Ovary (tissue), 10 donors: ENCODE measurements at regions of chr6 and their contacts with region 1.

Region 1: GRCh38 chr6:129598244-129599187 is 111.5 kb downstream of the ARHGAP18 start:
- DNase-seq: no peak
- H3K4me3 ChIP-seq: no peak overlapping the region
- H3K27ac ChIP-seq: no peak overlapping the region
- H3K4me1 ChIP-seq: no peaks in the 10 kb centered on the region
- H3K27me3 ChIP-seq: no peaks in the 10 kb centered on the region
- CTCF ChIP-seq: peak; percentile 69 to 92 (median 85)
- EP300 ChIP-seq: no peak
- POLR2A ChIP-seq: no peak

Region 2: GRCh38 chr6:129175066-129175465 is 423.4 kb before region 1 on chr6:
- intact Hi-C with region 1: no loop called
- DNase-seq: no peak
- H3K4me3 ChIP-seq: no peak overlapping the region
- H3K27ac ChIP-seq: no peak overlapping the region
- H3K4me1 ChIP-seq: no peaks in the 10 kb centered on the region
- H3K27me3 ChIP-seq: no peaks in the 10 kb centered on the region
- CTCF ChIP-seq: no peak
- EP300 ChIP-seq: no peak
- POLR2A ChIP-seq: no peak

Region 3: DNA sequence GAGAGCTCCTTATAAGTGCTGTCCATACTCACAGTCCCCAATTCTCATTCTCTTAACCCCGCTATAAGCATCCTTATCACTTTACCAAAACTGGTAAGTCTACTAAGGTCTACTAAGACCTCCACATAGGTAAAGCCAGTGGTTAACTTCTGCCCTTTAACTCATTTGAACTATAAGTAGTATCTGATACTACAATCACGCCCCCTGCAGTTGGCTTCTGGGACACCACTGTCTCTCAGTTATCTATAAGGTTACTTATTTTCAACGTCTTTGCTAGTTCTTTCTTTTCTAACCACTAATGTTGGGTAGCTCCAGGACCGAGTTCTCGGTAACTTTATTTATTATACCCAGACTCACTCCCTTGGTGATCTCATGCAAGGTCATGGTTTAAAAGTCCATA is 31.1 kb before region 1 on chr6:
- intact Hi-C with region 1: no loop called
- DNase-seq: no peak
- H3K4me3 ChIP-seq: no peak overlapping the region
- H3K27ac ChIP-seq: no peak overlapping the region
- H3K4me1 ChIP-seq: no peaks in the 10 kb centered on the region
- H3K27me3 ChIP-seq: no peaks in the 10 kb centered on the region
- CTCF ChIP-seq: no peak
- EP300 ChIP-seq: no peak
- POLR2A ChIP-seq: no peak

Region 4: GRCh38 chr6:129759796-129760605 is 161.5 kb after region 1 on chr6:
- intact Hi-C with region 1: loop called in 1 of 4 experiments (anchors 5 kb)
- DNase-seq: no peak
- H3K4me3 ChIP-seq: no peak overlapping the region
- H3K27ac ChIP-seq: no peak overlapping the region
- H3K4me1 ChIP-seq: no peaks in the 10 kb centered on the region
- H3K27me3 ChIP-seq: no peaks in the 10 kb centered on the region
- CTCF ChIP-seq: no peak
- EP300 ChIP-seq: no peak
- POLR2A ChIP-seq: no peak

Region 5: DNA sequence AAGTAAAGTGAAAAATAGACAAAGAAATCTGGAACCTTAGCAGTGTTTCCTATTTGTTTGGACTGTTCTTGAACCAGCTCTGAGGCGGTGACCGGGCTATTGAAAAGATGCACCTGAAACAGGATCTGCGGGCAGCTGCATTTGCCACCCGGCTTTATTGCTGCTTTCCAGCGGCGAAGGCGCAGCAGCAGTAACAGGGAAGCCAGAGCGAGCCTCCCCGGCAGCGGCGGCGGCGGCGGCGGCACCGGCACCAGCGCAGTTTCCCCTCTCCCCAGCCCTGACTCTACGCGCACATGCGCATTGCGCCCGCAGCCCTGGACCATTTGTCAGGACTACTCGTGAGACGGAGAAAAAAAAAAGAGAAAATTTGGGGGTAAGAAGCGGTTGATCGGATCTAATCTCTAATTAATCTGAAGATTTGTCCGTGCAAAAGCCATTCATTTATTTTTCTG is 419.8 kb after region 1 on chr6 and contains the start of gene L3MBTL3:
- intact Hi-C with region 1: loop called in 1 of 4 experiments (anchors 10 kb)
- DNase-seq: peak; percentile 84 to 91 (median 88)
- H3K4me3 ChIP-seq: peak within 1 kb of the TSS; percentile 71
- H3K27ac ChIP-seq: peak within 1 kb of the TSS; percentile 81 to 85
- H3K4me1 ChIP-seq: no peaks in the 10 kb centered on the region
- H3K27me3 ChIP-seq: no peaks in the 10 kb centered on the region
- CTCF ChIP-seq: no peak
- EP300 ChIP-seq: no peak
- POLR2A ChIP-seq: no peak
- total RNA-seq, gene L3MBTL3: 6.5 to 17.9 (median 14.1) TPM